ENCODE measurements at regions of chr2 and their contacts with region 1.

Region 1: DNA sequence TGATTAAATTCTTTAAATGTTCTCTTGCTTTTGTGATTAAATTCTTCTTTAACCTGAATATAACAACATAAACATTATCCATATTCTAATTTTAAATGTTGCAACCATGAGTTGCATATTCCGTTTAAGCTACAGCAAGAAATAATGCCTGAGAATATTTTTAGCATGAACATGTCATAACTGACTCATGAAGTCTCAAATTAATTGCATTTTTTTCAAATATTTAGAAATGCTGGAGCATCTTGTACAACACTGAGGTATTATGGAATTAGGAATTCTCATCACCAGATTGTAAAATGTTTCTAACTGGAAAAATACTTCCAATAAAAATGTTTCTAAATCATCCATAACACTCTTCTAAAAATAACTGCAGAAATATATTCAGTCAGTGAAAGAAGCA is 14.7 kb downstream of the ROCK2 start:
- DNase-seq: no peak
- H3K4me3 ChIP-seq: no peak overlapping the region
- H3K27ac ChIP-seq: no peak overlapping the region
- H3K4me1 ChIP-seq: no peaks in the 10 kb centered on the region
- H3K27me3 ChIP-seq: no peaks in the 10 kb centered on the region
- CTCF ChIP-seq: no peak
- POLR2A ChIP-seq: no peak

Region 2: DNA sequence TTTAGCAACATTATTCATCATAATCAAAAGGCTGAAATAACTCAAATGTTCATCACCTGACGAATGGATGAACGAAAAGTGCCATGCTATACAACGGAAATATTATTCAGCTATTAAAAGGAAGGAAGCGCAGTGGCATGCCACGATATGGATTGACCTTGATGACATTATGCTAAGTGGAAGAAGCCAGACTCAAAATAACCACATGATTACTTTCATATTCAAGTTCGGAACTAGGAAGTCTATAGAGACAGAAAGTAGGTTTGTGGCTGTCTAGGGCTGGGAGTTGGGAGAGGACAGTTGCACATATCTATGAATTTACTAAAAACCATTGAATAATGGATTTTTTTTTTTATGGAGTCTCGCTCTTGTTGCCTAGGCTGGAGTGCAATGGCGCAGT is 503.8 kb before region 1 on chr2:
- intact Hi-C with region 1: loop called (anchors 5 kb)
- DNase-seq: no peak
- H3K4me3 ChIP-seq: no peak overlapping the region
- H3K27ac ChIP-seq: no peak overlapping the region
- H3K4me1 ChIP-seq: no peaks in the 10 kb centered on the region
- H3K27me3 ChIP-seq: peaks cover 0 to 22% of the 10 kb centered on the region in 2 donors
- CTCF ChIP-seq: no peak
- POLR2A ChIP-seq: no peak

Measured in breast epithelium (tissue), 4 donors.